ENCODE measurements at regions of chr21 and their contacts with region 1.

Region 1: GRCh38 chr21:25607151-25608043 is at the start of gene MRPL39:
- DNase-seq: peak; percentile 82 to 86 (median 85)
- H3K4me3 ChIP-seq: peak within 1 kb of the TSS; percentile 74 to 85
- H3K4me3 Mint-ChIP-seq: peak within 1 kb of the TSS; percentile 100
- H3K27ac ChIP-seq: peak within 1 kb of the TSS; percentile 76
- H3K27ac Mint-ChIP-seq: peak within 1 kb of the TSS; percentile 92 to 100 (median 98)
- H3K4me1 ChIP-seq: peaks cover 38% of the 10 kb centered on the region
- H3K4me1 Mint-ChIP-seq: peaks cover 23 to 47% (median 37%) of the 10 kb centered on the region in 4 donors
- H3K27me3 ChIP-seq: no peaks in the 10 kb centered on the region
- H3K27me3 Mint-ChIP-seq: no peaks in the 10 kb centered on the region
- total RNA-seq, gene MRPL39: 19.1 to 21.2 TPM

Region 2: GRCh38 chr21:25421327-25422028 is 185.9 kb before region 1 on chr21:
- CTCF ChIA-PET with region 1: interaction called, 27 read pairs
- POLR2A ChIA-PET with region 1: no interaction called
- intact Hi-C with region 1: loop called (anchors 1 kb)
- DNase-seq: peak; percentile 63 to 69 (median 63)
- H3K4me3 ChIP-seq: no peak overlapping the region
- H3K4me3 Mint-ChIP-seq: peak overlapping the region in 6 of 8 donors; percentile 1 to 81 (median 36)
- H3K27ac ChIP-seq: peak overlapping the region; percentile 7
- H3K27ac Mint-ChIP-seq: peak overlapping the region; percentile 29 to 89 (median 54)
- H3K4me1 ChIP-seq: peaks cover 11% of the 10 kb centered on the region
- H3K4me1 Mint-ChIP-seq: peaks cover 6 to 11% (median 9%) of the 10 kb centered on the region in 4 donors
- H3K27me3 ChIP-seq: no peaks in the 10 kb centered on the region
- H3K27me3 Mint-ChIP-seq: no peaks in the 10 kb centered on the region

Region 3: GRCh38 chr21:25561668-25562641 is 45.4 kb before region 1 on chr21:
- CTCF ChIA-PET with region 1: interaction called, 6 read pairs
- POLR2A ChIA-PET with region 1: interaction called, 19 read pairs
- intact Hi-C with region 1: loop called (anchors 1 kb)
- DNase-seq: peak; percentile 53 to 76 (median 55)
- H3K4me3 ChIP-seq: peak overlapping the region; percentile 38 to 63
- H3K4me3 Mint-ChIP-seq: peak overlapping the region; percentile 91 to 99 (median 97)
- H3K27ac ChIP-seq: peak overlapping the region; percentile 77
- H3K27ac Mint-ChIP-seq: peak overlapping the region; percentile 92 to 98 (median 97)
- H3K4me1 ChIP-seq: peaks cover 63% of the 10 kb centered on the region
- H3K4me1 Mint-ChIP-seq: peaks cover 45 to 71% (median 60%) of the 10 kb centered on the region in 4 donors
- H3K27me3 ChIP-seq: no peaks in the 10 kb centered on the region
- H3K27me3 Mint-ChIP-seq: no peaks in the 10 kb centered on the region

Region 4: DNA sequence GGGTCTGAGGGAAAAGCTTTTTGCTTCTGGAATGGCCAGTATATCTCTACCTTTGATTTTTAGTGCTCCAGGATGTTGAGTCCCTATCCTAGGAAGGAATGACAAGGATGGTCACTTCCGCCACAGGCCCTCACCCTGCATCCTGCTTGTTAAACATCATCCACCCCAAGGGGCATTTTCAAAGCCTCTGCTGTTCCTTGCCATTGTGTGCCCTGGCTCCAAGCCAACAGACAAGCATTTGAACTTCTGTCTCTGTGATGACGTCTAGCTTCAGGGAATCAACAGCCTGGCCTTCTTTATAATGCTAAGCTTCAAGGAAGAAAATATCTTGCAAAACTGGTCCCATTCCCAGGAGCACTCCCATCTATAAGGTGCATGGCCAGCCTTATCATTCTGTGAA is 19.4 kb after region 1 on chr21:
- CTCF ChIA-PET with region 1: interaction called, 10 read pairs
- POLR2A ChIA-PET with region 1: no interaction called
- intact Hi-C with region 1: no loop called
- DNase-seq: no peak
- H3K4me3 ChIP-seq: no peak overlapping the region
- H3K4me3 Mint-ChIP-seq: no peak overlapping the region
- H3K27ac ChIP-seq: no peak overlapping the region
- H3K27ac Mint-ChIP-seq: no peak overlapping the region
- H3K4me1 ChIP-seq: no peaks in the 10 kb centered on the region
- H3K4me1 Mint-ChIP-seq: no peaks in the 10 kb centered on the region
- H3K27me3 ChIP-seq: no peaks in the 10 kb centered on the region
- H3K27me3 Mint-ChIP-seq: peaks cover 0 to 2% of the 10 kb centered on the region in 2 donors

Region 5: GRCh38 chr21:25700741-25701140 is 93.3 kb after region 1 on chr21:
- CTCF ChIA-PET with region 1: interaction called, 40 read pairs
- POLR2A ChIA-PET with region 1: no interaction called
- intact Hi-C with region 1: no loop called
- DNase-seq: no peak
- H3K4me3 ChIP-seq: no peak overlapping the region
- H3K4me3 Mint-ChIP-seq: no peak overlapping the region
- H3K27ac ChIP-seq: no peak overlapping the region
- H3K27ac Mint-ChIP-seq: no peak overlapping the region
- H3K4me1 ChIP-seq: no peaks in the 10 kb centered on the region
- H3K4me1 Mint-ChIP-seq: no peaks in the 10 kb centered on the region
- H3K27me3 ChIP-seq: no peaks in the 10 kb centered on the region
- H3K27me3 Mint-ChIP-seq: no peaks in the 10 kb centered on the region

Region 6: GRCh38 chr21:25734904-25735645 is 127.7 kb after region 1 on chr21 and contains the starts of genes ATP5PF and GABPA:
- CTCF ChIA-PET with region 1: interaction called, 28 read pairs
- POLR2A ChIA-PET with region 1: interaction called, 37 read pairs
- intact Hi-C with region 1: loop called (anchors 1 kb)
- DNase-seq: peak; percentile 96 to 98 (median 98)
- H3K4me3 ChIP-seq: peak within 1 kb of the TSS; percentile 77 to 93
- H3K4me3 Mint-ChIP-seq: peak within 1 kb of the TSS; percentile 99 to 100 (median 100)
- H3K27ac ChIP-seq: peak within 1 kb of the TSS; percentile 91
- H3K27ac Mint-ChIP-seq: peak within 1 kb of the TSS; percentile 99 to 100 (median 100)
- H3K4me1 ChIP-seq: peaks cover 52% of the 10 kb centered on the region
- H3K4me1 Mint-ChIP-seq: peaks cover 38 to 71% (median 53%) of the 10 kb centered on the region in 4 donors
- H3K27me3 ChIP-seq: no peaks in the 10 kb centered on the region
- H3K27me3 Mint-ChIP-seq: peaks cover 3 to 4% of the 10 kb centered on the region in 2 donors
- total RNA-seq, gene ATP5PF: 56.6 to 64.1 TPM
- total RNA-seq, gene GABPA: 28.4 to 29.4 TPM

Region 7: DNA sequence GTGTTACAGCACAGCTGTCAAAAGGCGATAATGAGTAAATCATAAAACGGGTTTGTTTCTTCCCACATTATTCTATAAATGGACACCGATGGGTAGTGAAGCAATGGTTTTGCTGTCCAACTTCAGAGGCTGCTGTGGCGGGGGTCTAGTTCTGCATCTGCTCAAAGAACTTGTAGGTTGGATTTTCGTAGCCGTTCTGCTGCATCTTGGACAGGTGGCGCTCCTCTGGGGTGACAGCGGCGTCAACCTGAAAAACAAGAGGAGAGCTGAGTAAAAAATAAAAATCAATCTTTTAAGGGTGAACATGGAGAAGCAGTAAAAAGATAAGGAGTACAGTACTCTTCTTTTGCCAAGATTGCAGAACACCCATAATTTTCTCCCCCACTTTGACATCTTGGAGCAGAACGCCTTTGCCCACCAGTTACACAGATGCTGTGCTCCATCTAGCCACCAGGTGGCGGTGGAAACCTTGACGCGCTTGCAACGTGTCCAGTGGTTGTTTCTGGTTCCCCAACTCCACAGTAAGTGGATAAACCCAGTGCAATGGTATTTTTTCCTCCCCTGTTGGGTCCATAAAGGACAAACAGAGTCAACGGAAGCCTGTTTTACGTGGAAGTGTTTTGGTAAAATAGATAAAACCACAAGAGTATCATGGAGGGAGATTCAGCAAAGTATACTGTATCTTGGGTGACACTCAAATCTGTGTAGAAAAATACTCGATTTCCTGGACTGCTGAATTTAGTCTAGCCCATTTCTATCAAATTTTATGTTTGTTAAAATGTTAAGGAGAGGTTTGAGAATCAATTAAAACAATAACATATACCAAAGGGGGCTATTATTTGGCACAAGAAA is 274.4 kb after region 1 on chr21:
- CTCF ChIA-PET with region 1: no interaction called
- POLR2A ChIA-PET with region 1: no interaction called
- intact Hi-C with region 1: loop called (anchors 1 kb)
- DNase-seq: peak; percentile 42 to 56 (median 48)
- H3K4me3 ChIP-seq: no peak overlapping the region
- H3K4me3 Mint-ChIP-seq: no peak overlapping the region
- H3K27ac ChIP-seq: no peak overlapping the region
- H3K27ac Mint-ChIP-seq: no peak overlapping the region
- H3K4me1 ChIP-seq: no peaks in the 10 kb centered on the region
- H3K4me1 Mint-ChIP-seq: no peaks in the 10 kb centered on the region
- H3K27me3 ChIP-seq: no peaks in the 10 kb centered on the region
- H3K27me3 Mint-ChIP-seq: no peaks in the 10 kb centered on the region

Measured in CD4-positive, alpha-beta memory T cell (primary cell).